Astrocyte of the cerebellum (primary cell): ENCODE measurements at regions of chr1 and their contacts with region 1.

Region 1: GRCh38 chr1:33633019-33633801 is 160.8 kb downstream of the ZSCAN20 start:
- DNase-seq: peak; percentile 74
- H3K4me3 ChIP-seq: no peak overlapping the region
- CTCF ChIP-seq: peak; percentile 100

Region 2: GRCh38 chr1:33494929-33495328 is 138.3 kb before region 1 on chr1:
- in situ Hi-C with region 1: no loop called
- DNase-seq: no peak
- H3K4me3 ChIP-seq: no peak overlapping the region
- CTCF ChIP-seq: no peak

Region 3: GRCh38 chr1:33719771-33720670 is 86.8 kb after region 1 on chr1:
- in situ Hi-C with region 1: no loop called
- DNase-seq: peak; percentile 20
- H3K4me3 ChIP-seq: no peak overlapping the region
- CTCF ChIP-seq: no peak

Region 4: DNA sequence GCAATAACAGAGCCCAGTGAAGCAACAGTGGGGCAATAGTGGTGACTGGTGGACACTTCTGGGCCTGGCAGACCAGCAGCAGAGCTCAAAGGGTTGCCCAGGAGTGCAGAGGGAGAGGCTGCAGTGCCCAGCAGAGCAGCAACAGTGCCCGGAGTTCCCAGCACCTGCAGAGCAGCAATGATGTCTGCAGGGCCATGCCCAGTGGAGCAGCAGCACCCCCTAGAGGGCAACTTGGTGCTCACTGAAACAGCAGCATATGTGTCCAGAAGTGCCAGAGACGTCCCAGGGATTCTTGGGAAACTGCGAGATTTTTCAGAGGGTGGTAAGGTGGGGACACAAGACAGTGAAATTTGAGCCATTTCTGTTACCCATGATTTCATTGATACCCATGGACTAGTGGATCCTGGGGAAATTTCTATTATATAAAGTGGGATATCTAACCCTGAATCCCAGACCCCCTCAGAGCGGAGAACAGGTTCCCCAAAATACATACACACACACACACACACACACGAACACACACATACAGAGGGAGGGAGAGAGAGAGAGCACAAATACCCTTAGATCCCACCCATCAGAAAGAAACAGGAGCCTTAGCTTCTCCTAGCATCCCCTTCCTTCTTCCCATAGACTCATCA is 964.8 kb after region 1 on chr1:
- in situ Hi-C with region 1: loop called (anchors 25 kb)
- DNase-seq: peak; percentile 23
- H3K4me3 ChIP-seq: no peak overlapping the region
- CTCF ChIP-seq: peak; percentile 96